GM10248 (cell line): ENCODE measurements at regions of chr5 and their contacts with region 1.

Region 1: DNA sequence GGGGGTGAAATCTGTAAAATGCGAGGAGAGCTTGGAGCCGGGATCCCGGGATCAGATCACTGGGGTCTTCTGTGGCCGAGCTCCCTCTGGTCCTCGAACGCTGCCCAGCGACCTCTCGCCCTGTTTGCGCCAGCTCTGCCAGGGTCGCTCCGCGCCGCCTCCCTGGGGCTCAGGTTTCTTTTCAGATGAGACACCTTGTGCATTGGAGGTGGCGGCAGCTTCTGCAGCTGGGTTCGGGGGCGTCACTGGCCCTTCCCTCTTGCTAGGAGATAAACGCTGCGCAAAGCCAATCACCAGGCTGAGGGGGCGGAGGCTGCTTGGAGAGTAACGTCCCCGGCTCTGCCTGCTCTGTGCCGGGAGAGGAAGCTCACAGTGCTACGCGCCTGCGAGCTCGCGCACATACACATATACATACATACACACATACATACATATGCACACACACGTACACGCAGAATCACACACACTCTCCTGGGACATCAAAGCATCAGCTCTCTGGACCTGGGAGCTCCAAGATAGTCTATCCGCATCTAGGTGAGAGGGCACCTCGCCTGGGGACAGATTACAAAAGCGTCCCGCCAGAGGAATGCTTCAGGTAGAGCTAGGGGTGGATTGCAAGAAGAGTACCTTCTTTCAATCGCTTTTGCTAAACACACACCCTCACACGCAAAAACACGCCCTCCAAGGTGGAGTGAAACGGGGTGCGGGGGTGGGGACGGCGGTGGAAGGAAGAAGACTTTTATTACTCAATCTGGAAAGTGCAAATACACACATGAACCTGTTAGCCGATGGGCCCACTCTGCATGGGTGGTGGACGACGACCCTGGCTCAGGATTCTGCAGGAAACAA is at the start of gene ST8SIA4:
- DNase-seq: peak; percentile 82
- CTCF ChIP-seq: no peak

Region 2: DNA sequence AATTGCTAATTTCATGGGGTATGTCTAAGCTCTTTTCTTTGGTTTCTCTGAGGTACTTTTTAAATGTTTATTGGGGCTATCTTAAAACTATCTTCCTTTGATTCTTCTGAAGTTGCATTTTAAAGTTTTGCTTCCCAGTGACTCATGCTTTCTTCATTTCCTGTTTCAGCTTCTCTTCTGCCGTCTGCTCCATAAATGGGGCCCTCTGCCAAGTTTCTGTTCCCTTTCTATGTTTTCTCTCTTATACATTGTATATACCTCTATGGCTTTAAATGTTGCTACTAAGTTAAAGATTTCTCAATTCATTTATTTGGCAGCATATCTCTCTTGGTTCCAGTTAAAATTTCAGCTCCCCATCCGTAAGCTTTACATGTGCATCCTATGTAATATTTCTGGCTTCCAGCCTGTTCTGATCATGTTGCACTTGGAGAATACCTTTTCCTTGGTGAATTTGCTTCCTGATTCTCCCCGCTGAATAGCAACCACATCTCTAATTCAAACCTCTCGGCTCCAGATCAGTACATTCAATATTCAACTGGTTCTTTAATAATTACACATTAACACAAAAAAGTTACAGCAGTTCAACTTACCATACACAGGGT is 125.5 kb before region 1 on chr5:
- CTCF ChIA-PET with region 1: interaction called, 27 read pairs
- POLR2A ChIA-PET with region 1: interaction called, 4 read pairs
- DNase-seq: peak; percentile 41
- CTCF ChIP-seq: no peak

Region 3: DNA sequence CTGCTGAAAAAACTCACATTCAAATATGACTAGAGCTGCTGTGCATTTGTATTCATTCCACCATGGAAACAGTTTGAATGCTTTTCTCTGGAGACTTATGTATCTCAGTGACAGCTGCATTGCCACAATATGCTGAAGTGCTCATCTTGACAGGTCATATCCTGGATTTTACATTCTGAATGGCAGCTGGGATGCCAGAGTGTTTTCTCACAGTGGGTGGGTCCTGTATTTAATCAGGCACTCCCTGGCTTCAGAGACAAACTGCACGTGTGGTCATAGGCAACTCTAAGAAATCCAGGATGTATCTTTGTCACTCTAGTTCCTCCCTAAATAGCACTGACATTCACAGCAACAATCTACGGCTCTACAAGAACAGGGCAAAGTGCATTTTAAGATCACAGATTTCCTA is 75.8 kb before region 1 on chr5:
- CTCF ChIA-PET with region 1: interaction called, 3 read pairs
- POLR2A ChIA-PET with region 1: interaction called, 13 read pairs
- DNase-seq: no peak
- CTCF ChIP-seq: no peak

Region 4: GRCh38 chr5:100840384-100840783 is 62.9 kb before region 1 on chr5:
- CTCF ChIA-PET with region 1: interaction called, 49 read pairs
- POLR2A ChIA-PET with region 1: interaction called, 3 read pairs
- DNase-seq: no peak
- CTCF ChIP-seq: no peak

Region 5: DNA sequence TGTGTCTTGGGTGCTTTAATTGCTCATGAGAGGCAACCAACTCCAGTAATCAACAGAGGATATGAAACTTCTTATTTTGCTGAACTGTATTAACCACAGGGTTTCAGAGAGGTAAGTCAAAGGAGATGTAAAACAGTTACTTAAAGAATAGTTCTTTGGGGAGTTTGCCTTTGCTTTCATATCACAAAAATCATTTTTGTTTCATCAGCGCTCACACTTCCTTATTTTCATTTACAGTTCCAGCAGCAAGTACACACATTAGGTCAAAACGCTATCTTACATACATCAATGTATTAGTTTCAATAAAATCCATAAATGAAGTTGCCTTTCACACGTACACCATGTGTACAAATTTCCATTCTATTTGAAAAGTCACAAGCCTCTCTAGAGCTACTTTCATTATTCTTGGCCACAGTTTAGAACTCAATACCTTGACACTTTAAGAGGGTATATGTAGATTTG is 50.2 kb before region 1 on chr5:
- CTCF ChIA-PET with region 1: interaction called, 13 read pairs
- POLR2A ChIA-PET with region 1: interaction called, 4 read pairs
- DNase-seq: peak; percentile 53
- CTCF ChIP-seq: no peak

Region 6: GRCh38 chr5:100860407-100860806 is 42.9 kb before region 1 on chr5:
- CTCF ChIA-PET with region 1: interaction called, 13 read pairs
- POLR2A ChIA-PET with region 1: interaction called, 5 read pairs
- DNase-seq: no peak
- CTCF ChIP-seq: no peak

Region 7: GRCh38 chr5:100890461-100891008 is 12.7 kb before region 1 on chr5:
- CTCF ChIA-PET with region 1: interaction called, 21 read pairs
- POLR2A ChIA-PET with region 1: interaction called, 5 read pairs
- DNase-seq: no peak
- CTCF ChIP-seq: no peak